Activated CD8-positive, alpha-beta T cell treated with anti-CD3 and anti-CD28 coated beads, Interleukin-2, amount 10 ng/mL, durations not matched to agents 7 days and 5 days (primary cell): ENCODE measurements at regions of chr20 and their contacts with region 1.

Region 1: DNA sequence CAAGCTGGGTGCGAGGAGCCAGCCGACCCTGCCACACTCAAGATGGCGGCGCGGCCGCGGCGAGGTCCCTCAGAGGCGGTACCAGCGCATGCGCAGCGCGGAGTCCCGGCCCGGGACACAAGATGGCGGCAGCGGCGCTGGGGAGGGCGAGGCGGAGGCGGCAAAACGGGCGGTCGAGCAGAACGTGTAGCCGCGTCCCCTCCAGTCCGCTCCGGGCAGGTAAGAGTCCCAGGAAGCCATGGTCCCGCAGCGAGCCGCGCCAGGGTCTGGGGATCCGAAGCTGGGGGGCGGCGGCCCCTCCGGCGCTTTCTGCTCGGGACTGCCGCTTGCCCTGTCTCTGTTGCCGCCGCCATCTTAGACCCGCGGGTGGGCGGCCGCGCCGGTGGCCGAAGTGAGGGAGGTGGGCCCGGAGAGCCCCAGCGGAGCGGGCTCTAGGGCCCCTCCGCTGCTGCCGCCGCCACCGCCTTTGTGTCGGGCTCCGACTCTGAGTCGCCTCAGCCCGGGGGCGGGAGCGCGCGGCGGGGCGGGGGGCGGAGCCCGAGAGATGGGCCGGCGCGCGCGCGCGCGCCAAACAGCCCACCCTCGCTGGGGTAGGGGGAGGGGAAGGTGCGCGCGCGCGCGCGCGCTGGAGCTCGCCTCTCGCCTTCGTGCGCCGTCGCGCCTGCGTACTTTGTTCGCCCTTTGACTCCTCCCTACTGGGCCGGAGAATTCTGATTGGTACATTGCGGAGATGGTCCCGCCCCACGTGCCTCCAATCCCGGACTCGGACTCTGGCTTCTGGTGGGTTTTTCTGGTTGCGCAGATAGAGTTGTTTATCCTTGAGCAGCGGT is at the start of gene PCIF1:
- DNase-seq: peak; percentile 99
- ATAC-seq: peak; percentile 83
- H3K4me3 Mint-ChIP-seq: peak within 1 kb of the TSS; percentile 90
- H3K27ac Mint-ChIP-seq: peak within 1 kb of the TSS; percentile 98
- H3K4me1 Mint-ChIP-seq: peaks cover 29% of the 10 kb centered on the region
- H3K27me3 Mint-ChIP-seq: no peaks in the 10 kb centered on the region
- total RNA-seq, gene PCIF1: 40.3 to 41.2 TPM

Region 2: GRCh38 chr20:45857114-45857881 is 77.5 kb before region 1 on chr20 and contains the starts of genes ACOT8 and ZSWIM3:
- CTCF ChIA-PET with region 1: interaction called, 3 read pairs
- POLR2A ChIA-PET with region 1: interaction called, 19 read pairs
- DNase-seq: peak; percentile 99
- ATAC-seq: peak; percentile 98
- H3K4me3 Mint-ChIP-seq: peak within 1 kb of the TSS; percentile 98
- H3K27ac Mint-ChIP-seq: peak within 1 kb of the TSS; percentile 100
- H3K4me1 Mint-ChIP-seq: peaks cover 55% of the 10 kb centered on the region
- H3K27me3 Mint-ChIP-seq: no peaks in the 10 kb centered on the region
- total RNA-seq, gene ACOT8: 29.3 to 32.1 TPM
- total RNA-seq, gene ZSWIM3: 5.1 to 5.8 TPM

Region 3: GRCh38 chr20:45890985-45891983 is 43.5 kb before region 1 on chr20 and contains the starts of genes CTSA and NEURL2:
- CTCF ChIA-PET with region 1: interaction called, 3 read pairs
- POLR2A ChIA-PET with region 1: interaction called, 39 read pairs
- DNase-seq: peak; percentile 91
- ATAC-seq: peak; percentile 87
- H3K4me3 Mint-ChIP-seq: peak within 1 kb of the TSS; percentile 87
- H3K27ac Mint-ChIP-seq: peak within 1 kb of the TSS; percentile 82
- H3K4me1 Mint-ChIP-seq: peaks cover 43% of the 10 kb centered on the region
- H3K27me3 Mint-ChIP-seq: no peaks in the 10 kb centered on the region
- total RNA-seq, gene CTSA: 63.4 to 64.1 TPM
- total RNA-seq, gene NEURL2: 1.1 to 1.3 TPM

Region 4: DNA sequence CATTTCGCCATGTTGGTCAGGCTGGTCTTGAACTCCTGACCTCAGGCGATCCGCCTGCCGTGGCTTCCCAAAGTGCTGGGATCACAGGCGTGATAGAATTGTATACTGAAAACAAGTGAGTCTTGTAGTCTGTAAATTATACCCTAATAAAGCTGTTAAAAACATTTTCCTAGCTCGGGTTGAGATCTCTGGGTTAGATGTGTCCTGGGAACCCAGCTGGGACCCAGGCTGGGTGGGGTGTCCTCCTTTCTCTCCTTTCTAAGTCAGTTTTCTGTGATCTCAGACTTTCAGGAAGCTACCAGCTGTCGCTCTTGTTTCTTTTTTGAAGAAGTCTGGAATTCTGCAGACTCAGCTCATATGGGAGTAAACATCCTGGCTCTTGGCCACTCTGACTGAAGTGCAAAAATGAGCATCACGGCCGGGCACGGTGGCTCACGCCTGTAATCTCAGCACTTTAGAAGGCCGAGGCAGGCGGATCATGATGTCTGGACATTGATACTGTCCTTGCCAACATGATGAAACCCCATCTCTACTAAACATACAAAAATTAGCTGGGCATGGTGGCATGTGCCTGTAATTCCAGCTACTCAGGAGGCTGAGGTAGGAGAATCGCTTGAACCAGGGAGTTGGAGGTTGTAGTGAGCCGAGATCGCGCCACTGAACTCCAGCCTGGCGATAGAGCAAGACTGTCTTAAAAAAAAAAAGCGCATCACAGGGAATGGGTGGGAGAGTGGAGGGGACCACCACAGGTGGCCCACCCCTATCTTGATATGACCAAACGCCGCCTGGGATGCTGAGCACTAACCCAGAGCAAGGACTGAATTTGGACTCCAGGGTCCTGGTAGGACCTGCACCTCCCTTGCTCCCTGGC is 10.2 kb before region 1 on chr20:
- CTCF ChIA-PET with region 1: interaction called, 5 read pairs
- POLR2A ChIA-PET with region 1: interaction called, 30 read pairs
- DNase-seq: no peak
- ATAC-seq: no peak
- H3K4me3 Mint-ChIP-seq: no peak overlapping the region
- H3K27ac Mint-ChIP-seq: no peak overlapping the region
- H3K4me1 Mint-ChIP-seq: no peaks in the 10 kb centered on the region
- H3K27me3 Mint-ChIP-seq: peaks cover 19% of the 10 kb centered on the region

Region 5: DNA sequence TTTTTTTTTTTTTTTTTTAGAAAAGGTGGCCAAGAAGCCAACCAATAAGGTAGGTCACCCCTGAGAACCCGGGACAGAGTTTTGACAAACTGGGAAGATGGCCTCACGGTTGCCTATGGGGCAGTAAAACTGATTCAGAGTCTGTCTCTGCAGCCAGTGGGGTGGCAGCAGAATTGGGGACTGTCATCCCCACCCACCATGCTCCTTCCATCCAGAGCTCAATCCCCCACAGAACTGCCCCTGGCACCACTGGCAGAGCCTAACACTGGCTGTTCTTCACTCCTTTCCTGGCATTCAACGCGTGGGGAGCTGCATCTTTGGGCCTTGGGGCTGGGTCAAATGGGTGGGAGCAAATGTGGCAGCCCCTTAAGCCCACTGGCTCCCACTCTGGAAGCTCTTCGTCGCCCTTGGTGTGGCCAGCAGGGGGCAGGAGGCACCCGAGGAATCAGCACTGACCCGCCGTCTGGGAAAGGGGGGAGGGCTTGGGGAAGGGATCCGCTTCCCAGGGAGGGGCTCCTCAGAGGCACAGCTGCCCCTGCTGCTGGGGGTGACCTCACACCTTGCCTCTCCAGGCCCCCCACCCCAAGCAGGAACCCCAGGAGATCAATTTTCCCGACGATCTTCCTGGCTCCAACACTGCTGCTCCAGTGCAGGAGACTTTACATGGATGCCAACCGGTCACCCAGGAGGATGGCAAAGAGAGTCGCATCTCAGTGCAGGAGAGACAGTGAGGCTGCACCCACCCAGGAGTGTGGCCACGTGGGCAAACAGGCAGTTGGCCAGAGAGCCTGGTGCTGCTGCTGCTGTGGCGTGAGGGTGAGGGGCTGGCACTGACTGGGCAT is 193.7 kb after region 1 on chr20:
- CTCF ChIA-PET with region 1: no interaction called
- POLR2A ChIA-PET with region 1: no interaction called
- DNase-seq: no peak
- ATAC-seq: no peak
- H3K4me3 Mint-ChIP-seq: no peak overlapping the region
- H3K27ac Mint-ChIP-seq: no peak overlapping the region
- H3K4me1 Mint-ChIP-seq: no peaks in the 10 kb centered on the region
- H3K27me3 Mint-ChIP-seq: peaks cover 14% of the 10 kb centered on the region

Region 6: DNA sequence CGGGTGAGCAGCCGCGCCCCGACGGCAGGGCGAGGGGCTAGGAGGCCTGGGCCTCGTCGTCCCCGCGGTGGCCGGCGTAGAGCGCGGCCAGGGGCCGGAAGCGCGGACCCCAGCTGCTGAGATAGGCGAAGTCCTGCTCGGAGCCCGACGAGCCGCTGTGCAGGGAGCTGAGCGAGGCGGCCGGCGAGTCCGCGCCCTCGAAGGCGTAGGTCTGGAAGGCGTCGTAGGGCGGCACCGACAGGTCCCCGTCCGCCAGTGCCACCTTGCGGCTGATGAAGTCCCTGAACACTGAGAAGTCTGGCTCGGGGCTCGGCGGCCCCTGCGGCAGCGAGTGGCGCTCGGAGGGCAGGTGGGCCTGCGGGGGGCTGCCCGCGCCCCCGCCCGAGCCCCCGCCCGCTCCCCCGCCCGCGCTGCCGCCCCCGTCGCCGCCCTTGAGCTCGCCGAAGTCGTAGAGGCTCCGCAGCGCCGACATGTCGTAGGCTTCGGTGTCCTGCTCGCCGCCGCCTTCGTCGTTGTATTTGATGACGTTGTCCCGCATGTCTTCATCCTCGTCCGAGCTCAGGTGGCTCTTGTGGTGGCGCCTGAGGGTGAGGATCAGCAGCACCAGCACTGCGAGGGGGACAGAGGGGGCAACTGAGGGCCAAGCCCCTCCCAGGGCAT is 239.8 kb after region 1 on chr20:
- CTCF ChIA-PET with region 1: no interaction called
- POLR2A ChIA-PET with region 1: no interaction called
- DNase-seq: peak; percentile 77
- ATAC-seq: peak; percentile 97
- H3K4me3 Mint-ChIP-seq: no peak overlapping the region
- H3K27ac Mint-ChIP-seq: no peak overlapping the region
- H3K4me1 Mint-ChIP-seq: no peaks in the 10 kb centered on the region
- H3K27me3 Mint-ChIP-seq: peaks cover 37% of the 10 kb centered on the region